ENCODE measurements at regions of chr1 and their contacts with region 1.

Region 1: GRCh38 chr1:42913426-42914091 is 45.1 kb downstream of the SLC2A1 start:
- DNase-seq: peak; percentile 86
- ATAC-seq: peak; percentile 98
- H3K4me3 ChIP-seq: no peak overlapping the region
- H3K4me3 Mint-ChIP-seq: no peak overlapping the region
- H3K27ac ChIP-seq: no peak overlapping the region
- H3K27ac Mint-ChIP-seq: peak overlapping the region; percentile 44
- H3K4me1 ChIP-seq: peaks cover 0 to 4% of the 10 kb centered on the region in 2 donors
- H3K4me1 Mint-ChIP-seq: peaks cover 5% of the 10 kb centered on the region
- H3K27me3 ChIP-seq: no peaks in the 10 kb centered on the region
- H3K27me3 Mint-ChIP-seq: peaks cover 5% of the 10 kb centered on the region
- CTCF ChIP-seq: peak; percentile 89

Region 2: GRCh38 chr1:42777852-42778251 is 135.7 kb before region 1 on chr1:
- CTCF ChIA-PET with region 1: interaction called, 15 read pairs
- POLR2A ChIA-PET with region 1: no interaction called
- intact Hi-C with region 1: loop called (anchors 2 kb)
- DNase-seq: peak; percentile 45
- ATAC-seq: peak; percentile 60
- H3K4me3 ChIP-seq: no peak overlapping the region
- H3K4me3 Mint-ChIP-seq: no peak overlapping the region
- H3K27ac ChIP-seq: no peak overlapping the region
- H3K27ac Mint-ChIP-seq: no peak overlapping the region
- H3K4me1 ChIP-seq: no peaks in the 10 kb centered on the region
- H3K4me1 Mint-ChIP-seq: peaks cover 5% of the 10 kb centered on the region
- H3K27me3 ChIP-seq: no peaks in the 10 kb centered on the region
- H3K27me3 Mint-ChIP-seq: no peaks in the 10 kb centered on the region
- CTCF ChIP-seq: peak; percentile 70

Region 3: DNA sequence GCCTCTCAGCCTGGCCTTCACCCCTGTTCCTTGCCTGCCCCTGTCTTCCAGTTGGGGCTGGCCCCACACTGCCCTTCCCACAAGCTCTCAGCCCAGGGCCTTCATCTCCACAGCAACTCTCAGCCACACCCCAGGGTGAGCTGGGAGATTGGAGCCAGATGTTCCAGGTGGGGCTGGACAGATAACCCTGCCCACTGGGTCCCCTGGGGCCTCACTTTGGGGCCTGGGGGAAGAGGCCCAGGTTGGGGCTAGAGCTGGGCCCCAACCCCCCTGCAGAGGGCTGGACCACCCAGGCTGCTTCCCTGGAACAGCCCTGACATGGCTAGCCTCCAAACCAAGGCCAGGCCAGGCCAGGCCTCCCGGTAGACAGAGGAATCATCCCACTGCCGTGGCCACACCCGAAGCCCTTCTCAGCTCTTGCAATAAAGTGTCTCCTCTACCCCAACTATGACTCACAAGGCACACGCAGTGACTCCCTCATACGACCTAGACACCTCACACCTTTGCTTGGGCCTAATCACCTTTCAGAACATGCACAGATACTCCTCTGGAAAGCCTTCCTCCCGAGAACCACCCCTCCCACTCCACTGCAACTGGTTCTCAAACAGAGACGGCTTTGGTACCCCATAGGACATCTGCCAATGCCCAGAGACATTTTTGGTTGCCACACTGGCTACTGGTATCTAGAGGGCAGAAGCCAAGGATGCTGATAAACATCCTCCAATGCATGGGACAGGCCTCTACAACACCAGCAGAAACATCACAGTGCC is 22.9 kb after region 1 on chr1:
- CTCF ChIA-PET with region 1: interaction called, 13 read pairs
- POLR2A ChIA-PET with region 1: no interaction called
- intact Hi-C with region 1: no loop called
- DNase-seq: no peak
- ATAC-seq: no peak
- H3K4me3 ChIP-seq: no peak overlapping the region
- H3K4me3 Mint-ChIP-seq: peak overlapping the region; percentile 61
- H3K27ac ChIP-seq: peak overlapping the region; percentile 87 to 97
- H3K27ac Mint-ChIP-seq: peak overlapping the region; percentile 97
- H3K4me1 ChIP-seq: peaks cover 96 to 100% of the 10 kb centered on the region in 2 donors
- H3K4me1 Mint-ChIP-seq: peaks cover 98% of the 10 kb centered on the region
- H3K27me3 ChIP-seq: no peaks in the 10 kb centered on the region
- H3K27me3 Mint-ChIP-seq: no peaks in the 10 kb centered on the region
- CTCF ChIP-seq: no peak

Region 4: DNA sequence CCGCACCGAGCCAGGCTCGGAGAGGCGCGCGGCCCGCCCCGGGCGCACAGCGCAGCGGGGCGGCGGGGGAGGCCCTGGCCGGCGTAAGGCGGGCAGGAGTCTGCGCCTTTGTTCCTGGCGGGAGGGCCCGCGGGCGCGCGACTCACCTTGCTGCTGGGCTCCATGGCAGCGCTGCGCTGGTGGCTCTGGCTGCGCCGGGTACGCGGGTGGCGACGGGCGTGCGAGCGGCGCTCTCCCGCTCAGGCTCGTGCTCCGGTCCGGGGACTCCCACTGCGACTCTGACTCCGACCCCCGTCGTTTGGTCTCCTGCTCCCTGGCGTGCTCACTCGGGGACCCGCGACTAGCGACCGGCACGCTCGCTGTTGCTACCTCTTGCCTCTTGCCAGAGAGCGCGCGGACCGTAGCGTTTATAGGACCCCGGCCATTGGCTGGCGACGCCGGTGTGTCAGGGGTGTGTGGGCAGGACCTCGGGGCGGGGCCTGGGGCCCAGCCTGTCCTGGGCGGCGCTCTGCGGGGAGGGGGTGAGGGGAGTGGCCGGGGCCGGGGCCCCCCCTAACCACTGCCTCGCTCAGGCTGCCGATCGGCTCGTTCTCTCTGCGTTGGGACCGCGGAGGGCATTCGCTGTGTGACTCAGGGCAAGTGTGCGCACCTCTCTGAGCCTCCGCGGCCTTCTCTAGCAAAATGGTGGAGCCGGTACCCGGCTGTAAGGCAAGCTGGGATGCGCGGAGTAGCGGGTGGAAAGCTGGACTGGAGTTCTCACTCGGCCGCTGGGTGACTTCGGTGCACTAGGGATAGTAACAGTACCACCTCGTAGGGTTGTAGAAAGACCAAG is 45.1 kb after region 1 on chr1 and contains the start of gene SLC2A1:
- CTCF ChIA-PET with region 1: interaction called, 18 read pairs
- POLR2A ChIA-PET with region 1: no interaction called
- intact Hi-C with region 1: no loop called
- DNase-seq: peak; percentile 97
- ATAC-seq: peak; percentile 89
- H3K4me3 ChIP-seq: peak within 1 kb of the TSS; percentile 76 to 93 (median 87)
- H3K4me3 Mint-ChIP-seq: peak within 1 kb of the TSS; percentile 97
- H3K27ac ChIP-seq: peak within 1 kb of the TSS; percentile 59 to 86
- H3K27ac Mint-ChIP-seq: peak within 1 kb of the TSS; percentile 99
- H3K4me1 ChIP-seq: peaks cover 64 to 85% of the 10 kb centered on the region in 2 donors
- H3K4me1 Mint-ChIP-seq: peaks cover 73% of the 10 kb centered on the region
- H3K27me3 ChIP-seq: no peaks in the 10 kb centered on the region
- H3K27me3 Mint-ChIP-seq: no peaks in the 10 kb centered on the region
- CTCF ChIP-seq: no peak
- total RNA-seq, gene SLC2A1: 240 and 241 TPM in 2 replicates

Region 5: DNA sequence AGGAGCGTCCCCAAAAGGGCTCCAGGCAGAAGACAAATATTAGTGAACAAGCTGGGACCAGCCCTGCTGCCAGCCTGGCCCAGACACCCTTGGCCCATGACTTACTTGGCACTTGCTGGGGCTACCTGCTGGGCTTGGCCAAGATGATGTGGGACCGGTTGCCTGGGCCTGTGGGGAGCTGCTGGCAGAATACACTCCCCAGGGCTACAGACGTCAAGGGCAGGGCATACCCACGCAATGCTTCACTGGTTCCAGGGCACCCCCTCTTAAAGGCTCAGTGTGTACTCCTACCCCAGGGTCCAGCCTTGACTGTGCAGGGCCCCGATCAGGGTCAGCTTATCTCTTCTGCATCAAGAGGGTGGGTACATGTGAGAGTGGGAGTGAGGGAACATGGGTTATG is 151.6 kb after region 1 on chr1:
- CTCF ChIA-PET with region 1: interaction called, 1,178 read pairs
- POLR2A ChIA-PET with region 1: no interaction called
- intact Hi-C with region 1: no loop called
- DNase-seq: no peak
- ATAC-seq: no peak
- H3K4me3 ChIP-seq: no peak overlapping the region
- H3K4me3 Mint-ChIP-seq: no peak overlapping the region
- H3K27ac ChIP-seq: no peak overlapping the region
- H3K27ac Mint-ChIP-seq: no peak overlapping the region
- H3K4me1 ChIP-seq: peaks cover 11 to 15% of the 10 kb centered on the region in 2 donors
- H3K4me1 Mint-ChIP-seq: peaks cover 23% of the 10 kb centered on the region
- H3K27me3 ChIP-seq: no peaks in the 10 kb centered on the region
- H3K27me3 Mint-ChIP-seq: peaks cover 2% of the 10 kb centered on the region
- CTCF ChIP-seq: no peak

Region 6: DNA sequence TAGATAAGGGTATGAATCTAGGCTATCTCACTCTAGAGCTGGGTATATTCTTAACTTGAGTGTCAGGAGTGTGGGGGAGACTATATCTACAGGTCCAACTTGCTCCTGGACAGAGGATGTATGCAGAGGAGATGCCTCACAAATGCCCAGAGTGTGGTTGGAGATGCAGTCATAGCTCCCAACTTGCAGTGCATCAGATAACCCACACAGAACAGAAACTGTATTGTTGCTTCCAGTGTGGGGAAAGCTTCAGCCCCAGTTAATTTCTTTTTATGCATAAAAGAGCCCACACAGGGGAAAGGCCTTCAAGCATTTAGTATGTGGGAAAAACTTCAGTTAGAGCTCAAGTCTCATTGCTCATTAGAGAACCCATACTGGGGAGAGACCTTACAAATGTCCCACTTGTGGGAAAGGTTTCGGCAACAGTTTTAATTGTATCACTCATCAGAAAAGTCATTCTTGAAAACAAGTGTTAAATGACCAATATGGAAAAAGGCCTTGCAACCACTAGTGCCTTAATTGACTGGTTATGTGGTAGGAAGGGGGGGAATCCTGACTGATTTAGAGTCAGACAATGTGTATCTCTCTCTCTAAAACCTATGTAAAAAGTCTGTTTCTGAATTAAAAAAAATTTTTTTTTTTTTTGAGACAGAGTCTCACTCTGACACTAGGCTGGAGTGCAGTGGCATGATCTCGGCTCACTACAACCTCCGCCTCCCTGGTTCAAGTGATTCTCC is 190.6 kb after region 1 on chr1:
- CTCF ChIA-PET with region 1: no interaction called
- POLR2A ChIA-PET with region 1: no interaction called
- intact Hi-C with region 1: no loop called
- DNase-seq: no peak
- ATAC-seq: no peak
- H3K4me3 ChIP-seq: no peak overlapping the region
- H3K4me3 Mint-ChIP-seq: no peak overlapping the region
- H3K27ac ChIP-seq: no peak overlapping the region
- H3K27ac Mint-ChIP-seq: no peak overlapping the region
- H3K4me1 ChIP-seq: no peaks in the 10 kb centered on the region
- H3K4me1 Mint-ChIP-seq: no peaks in the 10 kb centered on the region
- H3K27me3 ChIP-seq: no peaks in the 10 kb centered on the region
- H3K27me3 Mint-ChIP-seq: peaks cover 16% of the 10 kb centered on the region
- CTCF ChIP-seq: no peak

Region 7: GRCh38 chr1:43227143-43227764 is 313.7 kb after region 1 on chr1:
- CTCF ChIA-PET with region 1: interaction called, 17 read pairs
- POLR2A ChIA-PET with region 1: no interaction called
- intact Hi-C with region 1: loop called (anchors 1 kb)
- DNase-seq: peak; percentile 87
- ATAC-seq: peak; percentile 96
- H3K4me3 ChIP-seq: no peak overlapping the region
- H3K4me3 Mint-ChIP-seq: no peak overlapping the region
- H3K27ac ChIP-seq: no peak overlapping the region
- H3K27ac Mint-ChIP-seq: no peak overlapping the region
- H3K4me1 ChIP-seq: peaks cover 4 to 9% of the 10 kb centered on the region in 2 donors
- H3K4me1 Mint-ChIP-seq: peaks cover 10% of the 10 kb centered on the region
- H3K27me3 ChIP-seq: no peaks in the 10 kb centered on the region
- H3K27me3 Mint-ChIP-seq: no peaks in the 10 kb centered on the region
- CTCF ChIP-seq: peak; percentile 95

Region 8: GRCh38 chr1:43414634-43415223 is 501.2 kb after region 1 on chr1:
- CTCF ChIA-PET with region 1: interaction called, 18 read pairs
- POLR2A ChIA-PET with region 1: no interaction called
- intact Hi-C with region 1: no loop called
- DNase-seq: peak; percentile 79
- ATAC-seq: peak; percentile 96
- H3K4me3 ChIP-seq: no peak overlapping the region
- H3K4me3 Mint-ChIP-seq: no peak overlapping the region
- H3K27ac ChIP-seq: no peak overlapping the region
- H3K27ac Mint-ChIP-seq: peak overlapping the region; percentile 34
- H3K4me1 ChIP-seq: no peaks in the 10 kb centered on the region
- H3K4me1 Mint-ChIP-seq: peaks cover 3% of the 10 kb centered on the region
- H3K27me3 ChIP-seq: no peaks in the 10 kb centered on the region
- H3K27me3 Mint-ChIP-seq: no peaks in the 10 kb centered on the region
- CTCF ChIP-seq: peak; percentile 79